SK-N-SH (cell line): ENCODE measurements at regions of chr14 and their contacts with region 1.

Region 1: DNA sequence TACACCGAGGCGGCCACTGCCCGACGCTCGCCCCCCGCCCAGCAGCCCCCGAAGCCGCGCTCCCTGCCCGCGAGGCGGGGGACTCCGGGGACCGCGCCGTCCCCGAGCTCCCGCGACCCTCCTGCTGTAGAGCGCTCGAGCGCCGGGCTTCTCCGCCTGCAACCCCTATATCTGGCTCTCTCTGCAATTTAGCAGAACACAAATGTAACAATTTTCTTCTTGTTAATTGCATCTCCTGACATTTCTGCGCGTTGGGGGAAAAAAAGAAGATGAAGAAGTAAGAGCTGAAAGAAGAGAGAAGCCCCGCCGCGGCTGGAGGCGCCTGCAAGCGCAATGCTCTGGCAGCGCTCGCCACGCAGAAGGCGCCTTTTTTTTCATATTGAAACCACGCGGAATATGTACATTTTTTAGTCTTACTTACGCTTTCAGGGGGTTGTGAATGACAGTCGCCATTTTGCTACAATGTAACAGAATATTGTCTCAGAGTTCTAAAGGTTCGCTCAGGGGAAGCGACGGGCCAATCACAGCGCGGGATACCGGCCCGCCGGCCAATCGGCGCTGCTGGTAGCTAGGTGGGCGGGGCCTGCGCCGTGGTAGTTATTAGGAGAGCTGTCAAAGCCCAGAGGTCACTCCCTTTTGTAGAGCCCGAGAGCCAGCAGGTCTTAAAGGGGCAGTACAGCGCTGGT is at the start of gene DPF3:
- DNase-seq: peak; percentile 95
- H3K4me3 ChIP-seq: peak within 1 kb of the TSS; percentile 80 to 99
- H3K27ac ChIP-seq: peak within 1 kb of the TSS in 1 of 2 experiments; percentile 69; a peak in 1 of 4 replicates
- H3K4me1 ChIP-seq: peaks cover 15 to 26% of the 10 kb centered on the region in 2 experiments; a peak in 3 of 4 replicates
- H3K27me3 ChIP-seq: peaks cover 17% of the 10 kb centered on the region
- CTCF ChIP-seq: no peak
- EP300 ChIP-seq: no peak
- RAD21 ChIP-seq: no peak
- polyA plus RNA-seq, gene DPF3: 2.8 and 4.1 TPM in 2 replicates

Region 2: DNA sequence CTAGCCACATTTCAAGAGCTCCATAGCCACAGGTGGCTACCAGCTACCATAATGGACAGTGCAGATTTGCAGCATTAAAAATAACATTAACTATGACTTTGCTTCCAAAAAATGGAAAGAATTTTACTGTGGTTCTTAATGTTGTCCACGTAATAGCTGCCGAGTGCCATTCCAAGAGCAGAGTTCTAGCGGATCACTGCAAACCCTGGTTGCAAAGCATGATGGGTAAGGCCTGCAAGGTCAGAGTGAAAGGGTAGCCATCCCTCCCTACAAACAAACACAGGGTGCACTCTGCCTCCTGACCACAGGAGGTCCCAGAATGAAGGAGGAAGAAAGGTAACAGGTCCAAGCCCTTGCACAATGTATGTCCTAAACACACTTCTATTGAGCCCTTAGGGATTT is 157.5 kb before region 1 on chr14:
- CTCF ChIA-PET with region 1: interaction called, 10 read pairs
- POLR2A ChIA-PET with region 1: interaction called, 5 read pairs
- DNase-seq: peak; percentile 71
- H3K4me3 ChIP-seq: no peak overlapping the region; a peak in 1 of 4 replicates
- H3K27ac ChIP-seq: peak overlapping the region in 1 of 2 experiments; percentile 89; a peak in 2 of 4 replicates
- H3K4me1 ChIP-seq: peaks cover 23 to 54% of the 10 kb centered on the region in 2 experiments; a peak in 3 of 4 replicates
- H3K27me3 ChIP-seq: no peaks in the 10 kb centered on the region
- CTCF ChIP-seq: peak; percentile 28
- EP300 ChIP-seq: peak in 1 of 2 experiments; percentile 39; a peak in 1 of 4 replicates
- RAD21 ChIP-seq: peak; percentile 53

Region 3: GRCh38 chr14:72781476-72782181 is 112.2 kb before region 1 on chr14:
- CTCF ChIA-PET with region 1: no interaction called
- POLR2A ChIA-PET with region 1: no interaction called
- DNase-seq: no peak
- H3K4me3 ChIP-seq: no peak overlapping the region
- H3K27ac ChIP-seq: peak overlapping the region in 1 of 2 experiments; percentile 35; a peak in 2 of 4 replicates
- H3K4me1 ChIP-seq: peaks cover 0 to 7% of the 10 kb centered on the region in 2 experiments; a peak in 2 of 4 replicates
- H3K27me3 ChIP-seq: no peaks in the 10 kb centered on the region
- CTCF ChIP-seq: no peak
- EP300 ChIP-seq: peak in 1 of 2 experiments; percentile 33; a peak in 1 of 4 replicates
- RAD21 ChIP-seq: no peak

Region 4: DNA sequence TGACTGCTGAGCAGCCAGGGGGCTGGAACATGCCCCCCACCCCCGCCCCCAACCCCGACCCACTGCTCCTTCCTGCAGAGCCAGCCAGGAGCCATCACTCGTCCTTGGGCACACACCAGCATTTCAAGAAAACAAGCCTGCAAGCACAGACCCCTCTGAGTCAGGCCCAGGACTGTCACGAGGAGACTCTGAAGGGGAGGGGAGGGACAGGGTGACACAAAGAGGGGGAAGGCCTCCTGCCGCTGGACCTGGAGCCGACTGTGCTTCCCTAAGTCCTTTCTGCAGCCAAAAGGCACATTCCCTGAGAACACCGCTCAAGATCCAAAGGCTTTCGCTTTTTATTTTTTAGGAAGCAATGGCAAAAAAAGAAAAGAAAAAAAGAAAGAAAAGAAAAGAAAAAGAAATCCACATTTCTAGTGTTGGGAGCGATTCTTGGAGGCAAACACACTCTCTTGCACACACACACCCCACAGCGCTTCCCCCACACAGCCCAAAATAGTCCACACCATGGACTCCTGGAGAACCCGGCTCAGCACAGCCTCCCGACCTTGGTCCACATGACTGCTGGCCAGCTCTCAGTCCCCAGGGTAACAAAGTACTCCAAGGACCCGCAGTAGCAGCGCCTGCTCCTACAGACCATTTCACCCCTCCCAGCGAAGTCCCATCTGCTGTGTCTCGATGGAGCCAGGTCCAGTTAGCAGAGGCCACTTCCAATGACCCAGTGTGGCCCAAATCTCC is 101.6 kb before region 1 on chr14:
- CTCF ChIA-PET with region 1: no interaction called
- POLR2A ChIA-PET with region 1: no interaction called
- DNase-seq: no peak
- H3K4me3 ChIP-seq: no peak overlapping the region
- H3K27ac ChIP-seq: no peak overlapping the region
- H3K4me1 ChIP-seq: peaks cover 0 to 25% of the 10 kb centered on the region in 2 experiments; a peak in 1 of 4 replicates
- H3K27me3 ChIP-seq: no peaks in the 10 kb centered on the region
- CTCF ChIP-seq: no peak
- EP300 ChIP-seq: no peak
- RAD21 ChIP-seq: no peak